MCF 10A (cell line): ENCODE measurements at regions of chr18 and their contacts with region 1.

Region 1: GRCh38 chr18:80132180-80132812 is 23.2 kb downstream of the ADNP2 start:
- DNase-seq: peak; percentile 16
- H3K4me3 Mint-ChIP-seq: peak overlapping the region; percentile 58
- H3K27ac Mint-ChIP-seq: peak overlapping the region; percentile 85
- H3K4me1 Mint-ChIP-seq: peaks cover 24% of the 10 kb centered on the region
- H3K27me3 Mint-ChIP-seq: no peaks in the 10 kb centered on the region
- CTCF ChIP-seq: no peak

Region 2: DNA sequence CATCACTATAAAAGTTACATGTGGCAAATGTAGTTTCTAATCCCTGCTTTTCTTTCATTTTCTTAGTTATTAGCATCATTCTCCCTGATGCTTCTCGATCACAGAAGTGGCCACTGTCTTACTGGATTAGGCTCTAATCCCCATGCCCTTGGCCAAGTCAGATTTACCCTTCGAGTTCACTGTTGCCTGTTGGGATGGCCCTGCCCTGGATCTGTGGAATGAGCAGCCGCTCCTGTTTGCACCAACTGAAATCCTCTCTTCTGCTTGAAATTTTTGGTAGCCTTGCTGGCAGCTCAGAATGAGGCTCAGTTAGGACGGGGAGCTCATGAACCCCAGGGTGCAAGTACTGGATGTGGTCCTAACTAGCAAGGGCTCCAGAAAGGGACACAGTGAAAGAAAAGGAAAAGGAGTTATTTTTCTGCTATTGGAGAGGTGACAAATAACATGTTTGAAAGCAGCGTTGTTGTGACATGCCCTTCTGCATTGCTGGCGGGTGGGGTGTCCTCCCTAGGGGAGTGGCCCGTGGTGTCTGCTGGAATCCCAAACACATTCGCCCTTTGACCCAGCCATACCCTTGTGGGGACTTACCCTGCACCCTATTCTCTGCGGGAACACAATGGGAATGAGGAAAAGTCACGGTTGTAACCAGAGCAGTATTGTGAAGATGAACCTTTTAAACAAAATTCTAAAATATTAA is 63.6 kb before region 1 on chr18:
- CTCF ChIA-PET with region 1: no interaction called
- POLR2A ChIA-PET with region 1: no interaction called
- intact Hi-C with region 1: no loop called
- DNase-seq: no peak
- H3K4me3 Mint-ChIP-seq: no peak overlapping the region
- H3K27ac Mint-ChIP-seq: no peak overlapping the region
- H3K4me1 Mint-ChIP-seq: no peaks in the 10 kb centered on the region
- H3K27me3 Mint-ChIP-seq: no peaks in the 10 kb centered on the region
- CTCF ChIP-seq: no peak

Region 3: GRCh38 chr18:80119111-80119510 is 13.2 kb before region 1 on chr18:
- CTCF ChIA-PET with region 1: no interaction called
- POLR2A ChIA-PET with region 1: no interaction called
- intact Hi-C with region 1: no loop called
- DNase-seq: no peak
- H3K4me3 Mint-ChIP-seq: no peak overlapping the region
- H3K27ac Mint-ChIP-seq: no peak overlapping the region
- H3K4me1 Mint-ChIP-seq: peaks cover 5% of the 10 kb centered on the region
- H3K27me3 Mint-ChIP-seq: no peaks in the 10 kb centered on the region
- CTCF ChIP-seq: no peak

Region 4: DNA sequence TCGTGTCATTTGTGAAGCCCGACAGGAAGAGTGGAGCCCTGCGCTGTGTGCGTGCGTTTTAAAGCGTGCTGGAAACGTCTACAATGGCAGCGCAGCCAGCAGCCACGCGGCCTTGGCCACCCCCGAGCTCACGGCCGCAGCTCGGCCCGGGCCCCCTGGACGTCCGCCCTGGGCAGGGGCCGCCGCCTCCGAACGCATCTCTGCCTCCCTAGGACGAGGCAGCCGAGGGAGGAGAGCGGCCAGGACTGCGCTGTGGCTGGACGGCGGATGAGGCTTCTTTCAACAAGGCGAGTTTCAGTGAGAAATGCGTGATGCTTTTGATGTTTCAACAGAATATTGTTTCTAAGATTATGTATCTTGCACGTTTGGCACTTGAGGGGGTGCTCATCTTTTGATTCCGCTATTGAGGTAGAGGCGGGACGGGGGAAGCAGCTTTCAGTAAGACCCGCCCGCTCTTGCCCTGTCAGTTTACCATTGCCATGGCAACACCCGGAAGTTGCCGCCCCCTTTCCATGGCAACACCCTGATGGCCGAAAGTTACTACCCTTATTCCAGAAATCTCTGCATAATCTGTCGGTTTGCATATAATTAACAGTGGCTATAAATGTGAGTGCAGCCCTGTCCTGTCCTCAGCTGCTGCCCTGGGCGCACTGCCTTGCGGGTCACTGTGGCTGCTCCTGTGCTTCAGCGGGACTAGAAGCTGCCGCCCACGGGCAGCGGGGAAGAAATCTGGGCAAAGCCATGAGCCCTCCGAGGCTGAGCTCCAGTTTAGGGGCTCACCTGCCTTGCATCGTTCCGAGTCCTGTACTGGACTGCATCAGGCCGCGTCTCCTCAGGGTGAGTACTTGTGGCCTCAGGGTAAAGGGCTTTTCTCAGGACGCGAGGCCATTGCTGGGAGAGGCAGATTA is 15.4 kb after region 1 on chr18:
- CTCF ChIA-PET with region 1: interaction called, 6 read pairs
- POLR2A ChIA-PET with region 1: interaction called, 14 read pairs
- intact Hi-C with region 1: no loop called
- DNase-seq: peak; percentile 79
- H3K4me3 Mint-ChIP-seq: peak overlapping the region; percentile 73
- H3K27ac Mint-ChIP-seq: peak overlapping the region; percentile 76
- H3K4me1 Mint-ChIP-seq: no peaks in the 10 kb centered on the region
- H3K27me3 Mint-ChIP-seq: no peaks in the 10 kb centered on the region
- CTCF ChIP-seq: no peak